Heart left ventricle (tissue), 16 donors: ENCODE measurements at regions of chr3 and their contacts with region 1.

Region 1: GRCh38 chr3:134395103-134395502 is 20.9 kb upstream of the AMOTL2 start:
- DNase-seq: no peak
- ATAC-seq: no peak
- H3K4me3 ChIP-seq: no peak overlapping the region
- H3K27ac ChIP-seq: peak overlapping the region in 2 of 12 donors; percentile 3 to 22
- H3K4me1 ChIP-seq: peaks cover 0 to 41% (median 11%) of the 10 kb centered on the region in 12 donors
- H3K27me3 ChIP-seq: no peaks in the 10 kb centered on the region
- CTCF ChIP-seq: no peak
- POLR2A ChIP-seq: no peak

Region 2: GRCh38 chr3:134406331-134407238 is 11.5 kb after region 1 on chr3:
- intact Hi-C with region 1: no loop called
- DNase-seq: peak; percentile 61 to 75 (median 66)
- ATAC-seq: peak in 3 of 4 donors; percentile 68 to 80 (median 68)
- H3K4me3 ChIP-seq: peak overlapping the region; percentile 20 to 62 (median 51)
- H3K27ac ChIP-seq: peak overlapping the region in 5 of 12 donors; percentile 2 to 42 (median 35)
- H3K4me1 ChIP-seq: peaks cover 0 to 18% (median 11%) of the 10 kb centered on the region in 12 donors
- H3K27me3 ChIP-seq: peaks cover 0 to 20% (median 0%) of the 10 kb centered on the region in 9 donors
- CTCF ChIP-seq: peak in 1 of 12 donors; percentile 1
- POLR2A ChIP-seq: no peak

Region 3: GRCh38 chr3:134430950-134431445 is 35.9 kb after region 1 on chr3:
- intact Hi-C with region 1: loop called in 1 of 10 experiments (anchors 5 kb)
- DNase-seq: no peak
- ATAC-seq: no peak
- H3K4me3 ChIP-seq: no peak overlapping the region
- H3K27ac ChIP-seq: no peak overlapping the region
- H3K4me1 ChIP-seq: no peaks in the 10 kb centered on the region
- H3K27me3 ChIP-seq: no peaks in the 10 kb centered on the region
- CTCF ChIP-seq: no peak
- POLR2A ChIP-seq: no peak

Region 4: DNA sequence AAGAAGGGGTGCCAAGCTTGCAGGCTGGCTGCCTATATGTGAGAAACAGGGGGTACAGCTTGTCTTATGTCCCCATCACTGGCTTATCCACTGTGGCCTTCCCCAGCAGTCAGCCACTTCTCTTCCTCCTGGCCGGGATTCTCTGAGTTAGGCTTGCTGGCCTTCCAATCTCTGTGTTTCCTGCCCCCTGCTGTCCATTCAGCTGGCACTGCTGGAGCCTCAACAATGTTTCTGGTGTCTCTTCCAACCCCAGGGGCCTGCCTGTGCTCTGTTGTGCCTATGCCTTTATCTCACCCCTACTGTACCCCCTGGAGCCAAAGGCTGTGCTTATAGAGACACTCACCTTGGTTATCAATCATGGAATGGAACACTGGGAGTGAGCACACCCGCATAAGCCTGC is 54.2 kb after region 1 on chr3:
- intact Hi-C with region 1: loop called in 1 of 10 experiments (anchors 5 kb)
- DNase-seq: peak in 1 of 5 donors; percentile 29
- ATAC-seq: peak in 3 of 4 donors; percentile 31 to 73 (median 61)
- H3K4me3 ChIP-seq: no peak overlapping the region
- H3K27ac ChIP-seq: no peak overlapping the region
- H3K4me1 ChIP-seq: peaks cover 0 to 32% (median 20%) of the 10 kb centered on the region in 12 donors
- H3K27me3 ChIP-seq: peaks cover 0 to 1% (median 0%) of the 10 kb centered on the region in 9 donors
- CTCF ChIP-seq: peak in 9 of 12 donors; percentile 19 to 53 (median 41)
- POLR2A ChIP-seq: no peak

Region 5: DNA sequence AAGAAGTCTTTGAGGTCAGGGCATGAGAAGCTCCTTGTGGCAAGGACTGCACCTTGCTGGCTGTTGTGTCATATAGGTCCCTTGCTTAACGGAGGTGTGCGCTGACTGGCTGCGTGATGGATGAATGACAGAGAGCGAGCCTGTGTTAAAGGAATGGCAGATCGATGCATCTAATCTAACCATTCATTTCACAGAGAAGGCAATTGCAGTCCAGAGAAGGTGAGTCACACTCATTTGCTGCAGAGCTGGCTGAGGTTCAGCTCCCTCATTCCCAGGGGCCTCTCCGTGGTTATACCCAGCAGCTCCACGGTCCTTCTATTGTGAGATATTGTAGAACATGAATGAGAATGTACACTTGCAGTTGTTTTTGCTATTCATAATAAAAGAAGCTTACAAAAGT is 689.3 kb after region 1 on chr3:
- intact Hi-C with region 1: no loop called
- DNase-seq: no peak
- ATAC-seq: no peak
- H3K4me3 ChIP-seq: no peak overlapping the region
- H3K27ac ChIP-seq: no peak overlapping the region
- H3K4me1 ChIP-seq: peaks cover 0 to 7% (median 0%) of the 10 kb centered on the region in 12 donors
- H3K27me3 ChIP-seq: no peaks in the 10 kb centered on the region
- CTCF ChIP-seq: no peak
- POLR2A ChIP-seq: no peak